Dorsolateral prefrontal cortex (tissue), 120 donors: ENCODE measurements at regions of chr10 and their contacts with region 1.

Region 1: DNA sequence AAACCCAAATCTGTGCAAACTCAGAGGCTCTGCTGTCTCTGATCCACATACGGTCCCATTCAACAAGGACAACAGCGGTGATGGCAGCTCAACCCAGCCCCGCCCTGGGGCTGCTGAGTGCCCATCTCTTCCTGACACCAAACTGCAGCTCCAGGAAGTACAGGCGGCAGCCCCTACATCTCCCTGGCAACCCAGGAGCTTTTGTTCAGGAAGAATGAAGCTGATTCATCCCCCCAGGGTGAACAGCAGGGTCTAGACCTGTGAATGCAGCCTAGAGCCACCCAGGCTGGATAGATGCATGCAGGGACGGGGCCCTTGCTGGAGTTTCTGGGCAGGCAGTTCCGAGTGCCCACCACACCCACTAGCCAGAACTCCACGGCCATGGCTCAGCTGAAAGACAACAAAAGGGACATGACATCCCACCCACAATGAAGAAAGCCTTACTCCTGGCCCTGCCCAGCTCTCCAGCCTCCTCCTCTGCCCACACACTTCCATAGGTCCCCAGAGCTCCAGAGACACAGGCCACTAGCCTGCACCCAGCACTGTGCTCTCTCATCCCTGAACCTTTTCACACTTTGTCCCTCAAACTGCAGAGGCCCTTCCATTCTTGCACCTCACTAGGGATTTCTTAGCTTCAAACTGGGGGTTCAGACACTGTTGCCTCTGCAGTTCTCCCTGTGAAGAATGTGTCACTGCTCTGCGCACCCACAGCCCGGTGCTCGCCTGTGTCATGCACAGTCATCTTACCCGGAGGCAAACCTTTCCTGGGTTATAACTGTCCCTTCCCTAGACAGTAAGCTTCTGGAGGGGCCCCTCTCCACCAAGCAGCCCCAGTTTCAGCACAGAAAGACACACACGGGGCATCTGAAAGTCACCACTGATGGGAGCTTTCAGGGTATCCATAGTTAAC is 99.1 kb downstream of the GRID1 start:
- DNase-seq: peak in 7 of 10 donors; percentile 37 to 72 (median 52)
- H3K4me3 ChIP-seq: no peak overlapping the region
- H3K27ac ChIP-seq: peak overlapping the region; percentile 65 to 99 (median 95)
- H3K27me3 ChIP-seq: no peaks in the 10 kb centered on the region
- CTCF ChIP-seq: peak in 2 of 56 donors; percentile 13 to 23

Region 2: DNA sequence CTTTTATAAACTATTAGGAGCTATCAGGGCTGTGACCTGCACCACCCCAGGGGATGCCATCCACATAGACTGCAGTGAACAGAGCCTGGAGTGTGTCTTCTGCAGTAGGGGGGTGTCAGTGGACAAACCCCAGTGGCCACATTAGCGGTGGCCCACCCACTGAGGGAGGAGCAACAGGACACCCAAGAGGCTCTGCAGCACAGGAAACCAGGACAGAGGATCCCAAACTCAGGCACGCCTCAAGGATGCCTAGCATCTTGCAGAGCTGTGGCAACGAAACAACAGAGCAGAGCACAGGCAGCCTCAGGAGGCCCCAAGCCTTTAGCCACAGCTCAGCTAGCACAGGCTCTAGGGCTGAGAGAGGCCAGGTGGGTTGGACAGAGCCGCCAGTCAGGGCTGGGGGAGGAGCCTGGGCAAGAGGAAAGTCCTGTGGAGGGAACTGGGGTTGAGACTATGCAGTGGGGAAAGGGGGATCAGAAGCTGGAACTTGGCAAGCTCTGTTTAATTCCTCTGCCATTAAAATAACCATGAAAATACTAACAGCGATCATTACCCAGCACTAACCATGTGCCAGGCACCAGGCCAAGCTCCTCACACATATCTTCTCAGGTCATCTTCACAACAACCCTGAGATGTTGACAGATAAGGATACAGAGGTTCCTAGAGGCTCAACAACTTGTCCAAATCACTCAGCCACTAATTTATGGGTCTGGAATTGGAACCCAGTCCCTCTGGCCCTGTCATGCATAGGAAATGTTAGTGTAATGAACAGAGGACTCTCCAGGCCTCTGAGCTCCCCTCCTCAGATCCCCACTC is 45.4 kb after region 1 on chr10:
- intact Hi-C with region 1: loop called in 1 of 2 experiments (anchors 5 kb)
- DNase-seq: peak in 1 of 10 donors; percentile 43
- H3K4me3 ChIP-seq: no peak overlapping the region
- H3K27ac ChIP-seq: peak overlapping the region; percentile 64 to 97 (median 89)
- H3K27me3 ChIP-seq: no peaks in the 10 kb centered on the region
- CTCF ChIP-seq: no peak